Tibial artery (tissue), 4 donors: ENCODE measurements at regions of chr18 and their contacts with region 1.

Region 1: GRCh38 chr18:55337908-55338521 is 250.0 kb downstream of the TCF4 start:
- DNase-seq: peak; percentile 38 to 72
- H3K4me3 ChIP-seq: peak overlapping the region; percentile 41 to 49
- H3K27ac ChIP-seq: peak overlapping the region; percentile 64 to 77
- H3K4me1 ChIP-seq: peaks cover 0 to 21% (median 4%) of the 10 kb centered on the region in 4 donors
- H3K27me3 ChIP-seq: no peaks in the 10 kb centered on the region
- CTCF ChIP-seq: no peak

Region 2: DNA sequence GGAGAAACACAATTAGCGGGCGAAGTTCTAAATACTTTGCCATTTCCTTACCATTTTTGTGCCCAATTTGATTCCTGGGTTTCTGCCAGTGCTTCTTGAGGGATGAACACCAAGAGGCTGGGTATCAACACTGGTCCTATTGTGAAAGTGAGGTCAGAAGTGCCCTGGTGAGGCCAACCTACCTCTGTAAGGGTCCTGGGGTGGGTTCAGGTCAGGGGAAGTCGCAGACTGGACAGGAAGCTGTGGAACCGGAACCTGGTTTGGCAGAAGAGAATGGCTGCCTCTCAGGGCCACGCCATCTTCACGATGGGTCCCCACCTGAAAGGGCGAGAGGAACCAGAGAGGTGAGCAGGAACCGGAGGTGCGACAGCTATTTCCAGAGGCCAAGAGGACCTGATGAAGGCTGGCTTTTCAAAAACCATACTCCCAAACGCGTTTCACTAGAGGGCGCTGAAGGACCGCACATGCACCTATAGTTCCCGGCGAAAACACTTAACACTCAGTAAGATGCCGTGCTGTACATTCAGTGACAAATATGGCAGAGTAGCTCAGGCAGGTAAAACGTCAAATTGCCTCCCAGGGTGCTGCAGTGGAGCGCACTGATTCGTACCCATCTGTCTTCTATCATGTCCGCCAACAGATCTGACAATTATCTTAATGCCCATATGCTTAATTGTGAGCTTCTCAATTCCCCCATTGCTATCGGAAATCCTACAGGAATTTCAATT is 103.5 kb before region 1 on chr18:
- intact Hi-C with region 1: loop called (anchors 5 kb)
- DNase-seq: peak; percentile 78 to 79
- H3K4me3 ChIP-seq: peak overlapping the region in 1 of 2 donors; percentile 23
- H3K27ac ChIP-seq: no peak overlapping the region
- H3K4me1 ChIP-seq: peaks cover 0 to 17% (median 2%) of the 10 kb centered on the region in 4 donors
- H3K27me3 ChIP-seq: no peaks in the 10 kb centered on the region
- CTCF ChIP-seq: peak; percentile 71 to 79

Region 3: GRCh38 chr18:55863876-55864275 is 525.9 kb after region 1 on chr18:
- intact Hi-C with region 1: no loop called
- DNase-seq: no peak
- H3K4me3 ChIP-seq: no peak overlapping the region
- H3K27ac ChIP-seq: no peak overlapping the region
- H3K4me1 ChIP-seq: peaks cover 0 to 6% (median 2%) of the 10 kb centered on the region in 4 donors
- H3K27me3 ChIP-seq: no peaks in the 10 kb centered on the region
- CTCF ChIP-seq: no peak